WTC11 (cell line): ENCODE measurements at regions of chr11 and their contacts with region 1.

Region 1: DNA sequence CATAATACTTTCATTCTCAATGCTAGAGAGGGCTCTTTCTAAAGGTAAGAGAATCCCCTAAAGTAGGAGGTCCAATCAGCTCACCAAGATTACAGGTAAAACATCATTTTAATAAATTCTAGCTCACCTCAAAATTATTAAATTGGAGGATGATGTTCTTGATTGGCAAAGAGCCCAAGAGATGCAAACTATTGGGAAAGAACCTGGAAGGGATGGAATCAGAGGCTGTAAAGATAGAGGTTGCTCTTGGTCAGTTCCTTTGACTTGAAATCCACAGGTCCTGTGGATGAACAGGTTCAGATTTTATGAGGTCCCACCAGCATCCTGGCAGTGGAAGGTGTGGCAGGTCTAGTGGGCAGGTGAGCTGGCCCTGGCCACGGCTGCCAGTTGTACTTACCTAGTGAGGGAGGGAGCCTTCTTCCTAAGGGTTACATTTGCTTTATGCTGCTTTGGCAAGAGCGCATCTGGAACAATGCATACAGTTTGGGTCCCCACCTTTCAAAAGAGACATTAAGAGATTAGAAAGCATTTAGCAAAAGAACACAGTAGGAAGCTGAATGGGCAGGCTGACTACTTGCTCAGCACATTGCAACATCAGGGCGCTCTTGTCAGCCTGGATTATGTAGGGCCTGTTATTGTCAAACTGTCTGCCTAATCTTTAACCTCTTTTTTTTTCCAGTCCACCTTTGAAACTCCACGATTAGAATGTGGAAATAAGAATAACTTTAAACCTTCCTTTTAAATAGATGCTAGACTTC is 97.1 kb downstream of the RDX start:
- DNase-seq: no peak
- ATAC-seq: peak; percentile 37
- H3K4me3 Mint-ChIP-seq: no peak overlapping the region
- H3K27ac Mint-ChIP-seq: no peak overlapping the region
- H3K4me1 Mint-ChIP-seq: peaks cover 19% of the 10 kb centered on the region
- H3K27me3 Mint-ChIP-seq: no peaks in the 10 kb centered on the region
- CTCF ChIP-seq: no peak

Region 2: DNA sequence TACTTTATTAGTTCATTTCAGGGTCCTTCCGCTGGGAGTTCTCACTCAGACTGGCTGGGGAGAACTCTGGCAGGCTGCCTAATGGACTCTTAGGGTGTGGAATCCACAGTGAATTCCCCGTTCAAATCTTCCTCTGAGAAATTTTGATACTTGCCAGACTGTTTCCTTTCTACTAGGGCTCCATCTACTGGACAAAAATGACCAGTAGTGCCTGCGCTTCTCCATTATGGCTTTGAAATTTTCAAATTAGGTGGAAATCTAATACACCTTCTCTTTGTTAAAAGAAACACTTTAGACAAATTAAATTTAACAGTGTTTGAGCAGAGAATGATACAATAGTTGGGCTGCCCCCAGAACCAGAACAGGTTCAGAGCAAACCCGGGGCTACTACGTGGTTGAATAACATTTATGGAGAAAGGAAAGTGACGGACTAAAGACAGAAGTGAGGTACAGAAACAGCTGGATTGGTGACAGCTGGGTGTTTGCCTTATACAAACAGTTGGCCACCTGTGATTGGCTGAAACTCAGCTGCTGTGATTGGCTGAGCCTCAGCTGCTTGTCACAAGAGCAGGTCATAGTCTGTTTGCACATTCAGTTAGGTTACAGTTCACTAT is 177.5 kb after region 1 on chr11:
- CTCF ChIA-PET with region 1: interaction called, 29 read pairs
- POLR2A ChIA-PET with region 1: no interaction called
- DNase-seq: peak; percentile 22
- ATAC-seq: peak; percentile 95
- H3K4me3 Mint-ChIP-seq: no peak overlapping the region
- H3K27ac Mint-ChIP-seq: no peak overlapping the region
- H3K4me1 Mint-ChIP-seq: peaks cover 12% of the 10 kb centered on the region
- H3K27me3 Mint-ChIP-seq: no peaks in the 10 kb centered on the region
- CTCF ChIP-seq: peak; percentile 36; the same call in 1 of the 2 replicates

Region 3: GRCh38 chr11:110429731-110430266 is 230.4 kb after region 1 on chr11 and contains the start of gene FDX1:
- CTCF ChIA-PET with region 1: interaction called, 23 read pairs
- POLR2A ChIA-PET with region 1: no interaction called
- DNase-seq: peak; percentile 88
- ATAC-seq: peak; percentile 90
- H3K4me3 Mint-ChIP-seq: peak within 1 kb of the TSS; percentile 96
- H3K27ac Mint-ChIP-seq: peak within 1 kb of the TSS; percentile 94
- H3K4me1 Mint-ChIP-seq: peaks cover 40% of the 10 kb centered on the region
- H3K27me3 Mint-ChIP-seq: peaks cover 8% of the 10 kb centered on the region
- CTCF ChIP-seq: no peak
- total RNA-seq, gene FDX1: 9.3 to 9.9 TPM (median 9.6 TPM) in 3 replicates

Region 4: GRCh38 chr11:110434952-110435779 is 235.8 kb after region 1 on chr11:
- CTCF ChIA-PET with region 1: interaction called, 23 read pairs
- POLR2A ChIA-PET with region 1: no interaction called
- DNase-seq: peak; percentile 21
- ATAC-seq: peak; percentile 51
- H3K4me3 Mint-ChIP-seq: no peak overlapping the region
- H3K27ac Mint-ChIP-seq: no peak overlapping the region
- H3K4me1 Mint-ChIP-seq: peaks cover 39% of the 10 kb centered on the region
- H3K27me3 Mint-ChIP-seq: no peaks in the 10 kb centered on the region
- CTCF ChIP-seq: no peak